Activated naive CD4-positive, alpha-beta T cell treated with anti-CD3 and anti-CD28 coated beads, Interleukin-2, amount 10 ng/mL, durations not matched to agents 7 days and 5 days (primary cell): ENCODE measurements at regions of chr3 and their contacts with region 1.

Region 1: GRCh38 chr3:152508705-152509104 is 240.0 kb downstream of the MBNL1 start:
- DNase-seq: no peak
- H3K4me3 Mint-ChIP-seq: no peak overlapping the region
- H3K27ac Mint-ChIP-seq: no peak overlapping the region
- H3K4me1 Mint-ChIP-seq: peaks cover 25% of the 10 kb centered on the region
- H3K27me3 Mint-ChIP-seq: no peaks in the 10 kb centered on the region

Region 2: GRCh38 chr3:152151216-152151876 is 357.4 kb before region 1 on chr3:
- CTCF ChIA-PET with region 1: no interaction called
- DNase-seq: no peak
- H3K4me3 Mint-ChIP-seq: no peak overlapping the region
- H3K27ac Mint-ChIP-seq: no peak overlapping the region
- H3K4me1 Mint-ChIP-seq: peaks cover 16% of the 10 kb centered on the region
- H3K27me3 Mint-ChIP-seq: peaks cover 4% of the 10 kb centered on the region

Region 3: GRCh38 chr3:152524198-152525140 is 15.8 kb after region 1 on chr3:
- CTCF ChIA-PET with region 1: interaction called, 22 read pairs
- DNase-seq: peak; percentile 60
- H3K4me3 Mint-ChIP-seq: no peak overlapping the region
- H3K27ac Mint-ChIP-seq: no peak overlapping the region
- H3K4me1 Mint-ChIP-seq: no peaks in the 10 kb centered on the region
- H3K27me3 Mint-ChIP-seq: no peaks in the 10 kb centered on the region

Region 4: GRCh38 chr3:152574461-152575079 is 65.9 kb after region 1 on chr3:
- CTCF ChIA-PET with region 1: interaction called, 12 read pairs
- DNase-seq: peak; percentile 58
- H3K4me3 Mint-ChIP-seq: no peak overlapping the region
- H3K27ac Mint-ChIP-seq: no peak overlapping the region
- H3K4me1 Mint-ChIP-seq: no peaks in the 10 kb centered on the region
- H3K27me3 Mint-ChIP-seq: peaks cover 11% of the 10 kb centered on the region